Naive thymus-derived CD4-positive, alpha-beta T cell (primary cell): ENCODE measurements at regions of chr4 and their contacts with region 1.

Region 1: GRCh38 chr4:18021722-18022571 is at the start of gene LCORL:
- DNase-seq: peak; percentile 66 to 87 (median 84)
- ATAC-seq: peak; percentile 88
- H3K4me3 ChIP-seq: peak within 1 kb of the TSS; percentile 94
- H3K4me3 Mint-ChIP-seq: peak within 1 kb of the TSS; percentile 91 to 98 (median 94)
- H3K27ac ChIP-seq: peak within 1 kb of the TSS; percentile 75
- H3K27ac Mint-ChIP-seq: peak within 1 kb of the TSS; percentile 80 to 92 (median 89)
- H3K4me1 ChIP-seq: peaks cover 0 to 9% of the 10 kb centered on the region in 2 donors
- H3K4me1 Mint-ChIP-seq: peaks cover 13 to 28% (median 18%) of the 10 kb centered on the region in 7 donors
- H3K27me3 ChIP-seq: no peaks in the 10 kb centered on the region
- H3K27me3 Mint-ChIP-seq: peaks cover 0 to 75% (median 6%) of the 10 kb centered on the region in 5 donors
- total RNA-seq, gene LCORL: 7.7 to 15.2 (median 13.1) TPM

Region 2: GRCh38 chr4:17511950-17512795 is 509.8 kb before region 1 on chr4 and contains the start of gene QDPR:
- CTCF ChIA-PET with region 1: no interaction called
- POLR2A ChIA-PET with region 1: no interaction called
- intact Hi-C with region 1: loop called (anchors 1 to 2 kb)
- DNase-seq: peak; percentile 55 to 81 (median 70)
- ATAC-seq: peak; percentile 95
- H3K4me3 ChIP-seq: peak within 1 kb of the TSS; percentile 94
- H3K4me3 Mint-ChIP-seq: peak within 1 kb of the TSS; percentile 86 to 100 (median 96)
- H3K27ac ChIP-seq: peak within 1 kb of the TSS; percentile 69
- H3K27ac Mint-ChIP-seq: peak within 1 kb of the TSS; percentile 83 to 96 (median 85)
- H3K4me1 ChIP-seq: peaks cover 9 to 10% of the 10 kb centered on the region in 2 donors
- H3K4me1 Mint-ChIP-seq: peaks cover 18 to 42% (median 34%) of the 10 kb centered on the region in 7 donors
- H3K27me3 ChIP-seq: no peaks in the 10 kb centered on the region
- H3K27me3 Mint-ChIP-seq: peaks cover 0 to 18% (median 6%) of the 10 kb centered on the region in 5 donors
- total RNA-seq, gene QDPR: 11.8 to 27.7 (median 23.1) TPM

Region 3: GRCh38 chr4:17576932-17577665 is 444.8 kb before region 1 on chr4 and contains the start of gene LAP3:
- CTCF ChIA-PET with region 1: no interaction called
- POLR2A ChIA-PET with region 1: no interaction called
- intact Hi-C with region 1: loop called (anchors 1 kb)
- DNase-seq: peak; percentile 97 to 100 (median 99)
- ATAC-seq: peak; percentile 94
- H3K4me3 ChIP-seq: peak within 1 kb of the TSS; percentile 77
- H3K4me3 Mint-ChIP-seq: peak within 1 kb of the TSS; percentile 78 to 96 (median 92)
- H3K27ac ChIP-seq: peak within 1 kb of the TSS; percentile 96
- H3K27ac Mint-ChIP-seq: peak within 1 kb of the TSS; percentile 92 to 100 (median 97)
- H3K4me1 ChIP-seq: peaks cover 4 to 11% of the 10 kb centered on the region in 2 donors
- H3K4me1 Mint-ChIP-seq: peaks cover 20 to 47% (median 24%) of the 10 kb centered on the region in 7 donors
- H3K27me3 ChIP-seq: no peaks in the 10 kb centered on the region
- H3K27me3 Mint-ChIP-seq: peaks cover 0 to 2% (median 0%) of the 10 kb centered on the region in 5 donors
- total RNA-seq, gene LAP3: 25.2 to 142 (median 54.9) TPM

Region 4: GRCh38 chr4:17810260-17811077 is 211.5 kb before region 1 on chr4 and contains the starts of genes DCAF16 and NCAPG:
- CTCF ChIA-PET with region 1: no interaction called
- POLR2A ChIA-PET with region 1: interaction called, 10 read pairs
- intact Hi-C with region 1: loop called (anchors 1 kb)
- DNase-seq: peak; percentile 97 to 99 (median 97)
- ATAC-seq: peak; percentile 95
- H3K4me3 ChIP-seq: peak within 1 kb of the TSS; percentile 96
- H3K4me3 Mint-ChIP-seq: peak within 1 kb of the TSS; percentile 93 to 100 (median 98)
- H3K27ac ChIP-seq: peak within 1 kb of the TSS; percentile 99
- H3K27ac Mint-ChIP-seq: peak within 1 kb of the TSS; percentile 91 to 99 (median 98)
- H3K4me1 ChIP-seq: peaks cover 16 to 30% of the 10 kb centered on the region in 2 donors
- H3K4me1 Mint-ChIP-seq: peaks cover 50 to 65% (median 59%) of the 10 kb centered on the region in 7 donors
- H3K27me3 ChIP-seq: no peaks in the 10 kb centered on the region
- H3K27me3 Mint-ChIP-seq: no peaks in the 10 kb centered on the region
- total RNA-seq, gene DCAF16: 50.3 to 85.1 (median 73.8) TPM
- total RNA-seq, gene NCAPG: 0.24 to 44.1 (median 0.35) TPM

Region 5: GRCh38 chr4:18063079-18063478 is 41.1 kb after region 1 on chr4:
- CTCF ChIA-PET with region 1: no interaction called
- POLR2A ChIA-PET with region 1: no interaction called
- intact Hi-C with region 1: no loop called
- DNase-seq: no peak
- ATAC-seq: no peak
- H3K4me3 ChIP-seq: no peak overlapping the region
- H3K4me3 Mint-ChIP-seq: no peak overlapping the region
- H3K27ac ChIP-seq: no peak overlapping the region
- H3K27ac Mint-ChIP-seq: no peak overlapping the region
- H3K4me1 ChIP-seq: no peaks in the 10 kb centered on the region
- H3K4me1 Mint-ChIP-seq: peaks cover 0 to 3% (median 2%) of the 10 kb centered on the region in 7 donors
- H3K27me3 ChIP-seq: peaks cover 0 to 5% of the 10 kb centered on the region in 2 donors
- H3K27me3 Mint-ChIP-seq: peaks cover 44 to 63% (median 52%) of the 10 kb centered on the region in 5 donors

Region 6: DNA sequence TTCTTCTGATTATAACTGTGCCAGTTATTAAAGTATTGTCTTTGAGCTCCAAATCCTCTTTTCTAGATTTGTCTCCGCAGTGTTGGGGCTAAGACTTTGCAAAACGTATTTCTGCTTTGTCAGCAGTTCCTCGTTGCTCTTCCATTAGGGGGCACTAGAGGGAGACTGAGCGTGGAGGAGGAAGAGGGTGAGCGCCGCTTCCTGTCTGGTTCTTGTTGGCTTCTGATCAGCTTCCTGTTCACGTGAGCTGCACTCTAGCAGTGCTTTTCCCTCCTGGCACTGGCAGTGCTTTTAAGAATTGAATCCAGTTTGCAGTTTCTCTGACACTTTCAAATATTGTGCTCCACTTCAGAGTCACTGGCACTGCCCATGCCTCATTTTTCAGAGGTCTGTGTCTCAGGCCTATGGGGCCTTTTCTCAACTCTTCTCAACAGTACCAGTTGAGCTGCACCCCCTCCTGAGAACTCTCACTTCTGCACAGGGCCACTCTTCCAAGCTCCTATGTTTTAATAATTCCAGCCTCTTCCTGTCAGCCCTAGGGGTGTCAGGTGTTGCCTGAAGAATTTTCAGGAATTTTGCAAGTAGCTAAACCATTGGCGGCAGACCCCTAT is 54.0 kb after region 1 on chr4:
- CTCF ChIA-PET with region 1: no interaction called
- POLR2A ChIA-PET with region 1: no interaction called
- intact Hi-C with region 1: loop called in 1 of 2 experiments (anchors 1 kb)
- DNase-seq: peak in 6 of 9 donors; percentile 17 to 48 (median 40)
- ATAC-seq: peak; percentile 77
- H3K4me3 ChIP-seq: no peak overlapping the region
- H3K4me3 Mint-ChIP-seq: peak overlapping the region in 1 of 10 donors; percentile 13
- H3K27ac ChIP-seq: no peak overlapping the region
- H3K27ac Mint-ChIP-seq: peak overlapping the region in 3 of 9 donors; percentile 4 to 58 (median 50)
- H3K4me1 ChIP-seq: no peaks in the 10 kb centered on the region
- H3K4me1 Mint-ChIP-seq: peaks cover 0 to 11% (median 9%) of the 10 kb centered on the region in 7 donors
- H3K27me3 ChIP-seq: no peaks in the 10 kb centered on the region
- H3K27me3 Mint-ChIP-seq: peaks cover 13 to 36% (median 24%) of the 10 kb centered on the region in 5 donors

Region 7: GRCh38 chr4:18593445-18594002 is 571.6 kb after region 1 on chr4:
- CTCF ChIA-PET with region 1: no interaction called
- POLR2A ChIA-PET with region 1: no interaction called
- intact Hi-C with region 1: loop called in 1 of 2 experiments (anchors 2 kb)
- DNase-seq: peak in 8 of 9 donors; percentile 25 to 65 (median 51)
- ATAC-seq: peak; percentile 78
- H3K4me3 ChIP-seq: no peak overlapping the region
- H3K4me3 Mint-ChIP-seq: peak overlapping the region in 1 of 10 donors; percentile 53
- H3K27ac ChIP-seq: no peak overlapping the region
- H3K27ac Mint-ChIP-seq: no peak overlapping the region
- H3K4me1 ChIP-seq: no peaks in the 10 kb centered on the region
- H3K4me1 Mint-ChIP-seq: peaks cover 0 to 7% (median 0%) of the 10 kb centered on the region in 7 donors
- H3K27me3 ChIP-seq: no peaks in the 10 kb centered on the region
- H3K27me3 Mint-ChIP-seq: peaks cover 0 to 30% (median 15%) of the 10 kb centered on the region in 5 donors